ENCODE measurements at regions of chr13 and their contacts with region 1.

Region 1: GRCh38 chr13:29850224-29850898 is at the start of gene UBL3:
- DNase-seq: peak; percentile 99
- H3K4me3 ChIP-seq: peak within 1 kb of the TSS; percentile 58 to 94 (median 72)
- H3K27ac ChIP-seq: peak within 1 kb of the TSS; percentile 97 to 100 (median 98)
- H3K4me1 ChIP-seq: peaks cover 12 to 43% (median 34%) of the 10 kb centered on the region in 6 donors
- H3K27me3 ChIP-seq: no peaks in the 10 kb centered on the region
- CTCF ChIP-seq: peak in 1 of 11 experiments; percentile 12
- POLR2A ChIP-seq: peak; percentile 63 to 91 (median 80)
- total RNA-seq, gene UBL3: 26.0 to 39.1 (median 35.5) TPM

Region 2: DNA sequence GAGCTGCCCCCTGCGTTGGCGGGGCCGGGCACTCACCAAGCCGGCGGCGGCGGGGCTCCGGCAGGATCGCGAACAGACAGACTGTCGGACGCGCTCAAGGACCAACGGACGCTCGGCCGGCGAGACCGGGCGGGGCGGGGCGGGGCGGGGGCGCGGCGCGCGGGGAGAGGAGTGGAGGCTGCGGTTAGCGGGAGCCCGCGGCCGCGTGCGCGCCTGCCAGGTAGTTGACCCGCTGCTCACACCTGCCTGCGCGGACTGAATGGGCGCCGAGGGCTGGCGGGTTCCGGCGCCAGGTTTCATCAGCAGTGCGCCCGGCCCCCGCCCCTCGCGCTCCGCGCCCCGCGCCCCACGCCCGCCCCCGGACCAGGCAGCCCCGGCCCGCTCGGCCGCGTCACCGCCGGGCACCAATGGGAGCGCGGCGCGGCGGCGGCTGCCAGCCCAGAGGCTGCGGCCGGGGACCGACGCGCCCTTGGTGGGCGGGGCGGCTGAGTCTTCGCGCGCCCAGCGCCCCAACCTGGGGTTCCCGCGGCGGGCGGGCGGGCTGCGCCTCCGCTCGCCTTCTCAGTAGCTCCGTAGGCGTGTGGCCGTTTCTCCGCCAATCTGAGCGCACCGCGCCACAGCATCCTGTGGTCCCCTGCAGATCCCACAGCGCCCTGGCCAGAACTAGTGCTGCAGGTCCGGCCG is 254.8 kb before region 1 on chr13 and contains the start of gene SLC7A1:
- intact Hi-C with region 1: loop called (anchors 10 kb)
- DNase-seq: peak; percentile 95
- H3K4me3 ChIP-seq: peak within 1 kb of the TSS; percentile 81 to 99 (median 94)
- H3K27ac ChIP-seq: peak within 1 kb of the TSS; percentile 61 to 91 (median 82)
- H3K4me1 ChIP-seq: peaks cover 4 to 44% (median 22%) of the 10 kb centered on the region in 6 donors
- H3K27me3 ChIP-seq: no peaks in the 10 kb centered on the region
- CTCF ChIP-seq: peak in 1 of 11 experiments; percentile 13
- POLR2A ChIP-seq: no peak
- total RNA-seq, gene SLC7A1: 16.7 to 53.8 (median 26.0) TPM

Region 3: GRCh38 chr13:30125422-30126073 is 275.2 kb after region 1 on chr13:
- intact Hi-C with region 1: loop called (anchors 10 kb)
- DNase-seq: no peak
- H3K4me3 ChIP-seq: no peak overlapping the region
- H3K27ac ChIP-seq: no peak overlapping the region
- H3K4me1 ChIP-seq: peaks cover 0 to 11% (median 0%) of the 10 kb centered on the region in 6 donors
- H3K27me3 ChIP-seq: no peaks in the 10 kb centered on the region
- CTCF ChIP-seq: no peak
- POLR2A ChIP-seq: no peak

Region 4: DNA sequence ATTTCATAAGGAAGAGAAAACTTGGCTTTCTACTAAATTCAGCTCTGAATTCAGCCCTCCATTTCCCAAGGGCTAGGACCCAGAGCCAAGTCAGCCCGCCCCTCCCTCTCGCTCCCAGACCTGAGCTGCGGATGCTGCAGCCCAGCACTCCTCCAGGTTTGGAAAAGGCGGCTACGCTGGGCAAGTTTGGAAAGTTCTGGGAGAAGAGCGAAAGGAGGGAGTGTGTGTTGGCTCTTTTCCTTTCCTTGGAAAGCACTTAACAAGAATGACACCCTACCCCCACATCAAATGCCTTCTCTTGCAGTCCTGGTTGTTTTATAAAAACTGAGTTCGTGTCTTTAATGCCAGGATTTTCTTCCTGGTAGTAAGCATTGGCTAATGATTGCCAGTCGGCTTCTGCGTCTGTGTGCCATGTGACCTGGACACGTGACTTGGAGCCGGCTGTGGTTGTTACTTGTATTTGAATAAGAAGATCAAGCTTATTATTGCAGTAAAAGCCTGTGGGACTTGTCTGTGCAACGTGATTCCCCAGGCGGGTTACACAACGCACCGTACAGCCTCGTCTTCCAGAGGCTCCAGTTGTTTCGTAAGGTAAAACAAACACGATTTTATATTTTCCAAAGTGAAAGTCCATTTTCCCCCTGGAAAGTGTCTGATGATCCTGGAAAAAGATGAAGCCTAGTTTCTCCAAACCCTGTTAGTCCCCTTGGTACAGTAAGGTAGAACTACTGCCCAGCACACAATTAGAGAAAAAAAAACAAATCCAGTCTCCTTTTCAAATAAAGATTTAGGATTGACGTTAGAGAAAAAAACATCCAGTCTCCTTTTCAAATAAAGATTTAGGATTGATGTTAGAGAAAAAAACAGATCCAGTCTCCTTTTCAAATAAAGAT is 545.1 kb after region 1 on chr13:
- intact Hi-C with region 1: no loop called
- DNase-seq: peak; percentile 97
- H3K4me3 ChIP-seq: peak overlapping the region; percentile 18 to 70 (median 48)
- H3K27ac ChIP-seq: peak overlapping the region; percentile 75 to 96 (median 94)
- H3K4me1 ChIP-seq: peaks cover 3 to 31% (median 12%) of the 10 kb centered on the region in 6 donors
- H3K27me3 ChIP-seq: no peaks in the 10 kb centered on the region
- CTCF ChIP-seq: peak in 2 of 11 experiments; percentile 2 to 7
- POLR2A ChIP-seq: peak in 1 of 3 donors; percentile 33